H1 (cell line): ENCODE measurements at regions of chr15 and their contacts with region 1.

Region 1: GRCh38 chr15:78552597-78552996 is 12.4 kb downstream of the PSMA4 start:
- DNase-seq: no peak
- H3K4me3 ChIP-seq: no peak overlapping the region
- H3K27ac ChIP-seq: no peak overlapping the region
- H3K4me1 ChIP-seq: no peaks in the 10 kb centered on the region
- H3K27me3 ChIP-seq: no peaks in the 10 kb centered on the region
- CTCF ChIP-seq: no peak
- EP300 ChIP-seq: no peak
- POLR2A ChIP-seq: no peak
- RAD21 ChIP-seq: no peak

Region 2: GRCh38 chr15:78565097-78565951 is 12.7 kb after region 1 on chr15 and contains the start of gene CHRNA5:
- CTCF ChIA-PET with region 1: interaction called, 5 read pairs
- POLR2A ChIA-PET with region 1: interaction called, 11 read pairs
- DNase-seq: peak; percentile 95 to 100
- H3K4me3 ChIP-seq: peak within 1 kb of the TSS; percentile 80 to 89 (median 84)
- H3K27ac ChIP-seq: peak within 1 kb of the TSS; percentile 71; the same call in 1 of the 2 replicates
- H3K4me1 ChIP-seq: peaks cover 3 to 7% (median 4%) of the 10 kb centered on the region in 4 experiments; a peak in 6 of 7 replicates
- H3K27me3 ChIP-seq: no peaks in the 10 kb centered on the region
- CTCF ChIP-seq: 0 out of 4 replicates have a peak, but pooled peaks of 1 of the 3 experiments have one; percentile 3
- EP300 ChIP-seq: no peak
- POLR2A ChIP-seq: peak; percentile 92 to 95
- RAD21 ChIP-seq: no peak
- total RNA-seq, gene CHRNA5: 29.3 and 31.4 TPM in 2 replicates